Naive thymus-derived CD8-positive, alpha-beta T cell (primary cell): ENCODE measurements at regions of chr12 and their contacts with region 1.

Region 1: DNA sequence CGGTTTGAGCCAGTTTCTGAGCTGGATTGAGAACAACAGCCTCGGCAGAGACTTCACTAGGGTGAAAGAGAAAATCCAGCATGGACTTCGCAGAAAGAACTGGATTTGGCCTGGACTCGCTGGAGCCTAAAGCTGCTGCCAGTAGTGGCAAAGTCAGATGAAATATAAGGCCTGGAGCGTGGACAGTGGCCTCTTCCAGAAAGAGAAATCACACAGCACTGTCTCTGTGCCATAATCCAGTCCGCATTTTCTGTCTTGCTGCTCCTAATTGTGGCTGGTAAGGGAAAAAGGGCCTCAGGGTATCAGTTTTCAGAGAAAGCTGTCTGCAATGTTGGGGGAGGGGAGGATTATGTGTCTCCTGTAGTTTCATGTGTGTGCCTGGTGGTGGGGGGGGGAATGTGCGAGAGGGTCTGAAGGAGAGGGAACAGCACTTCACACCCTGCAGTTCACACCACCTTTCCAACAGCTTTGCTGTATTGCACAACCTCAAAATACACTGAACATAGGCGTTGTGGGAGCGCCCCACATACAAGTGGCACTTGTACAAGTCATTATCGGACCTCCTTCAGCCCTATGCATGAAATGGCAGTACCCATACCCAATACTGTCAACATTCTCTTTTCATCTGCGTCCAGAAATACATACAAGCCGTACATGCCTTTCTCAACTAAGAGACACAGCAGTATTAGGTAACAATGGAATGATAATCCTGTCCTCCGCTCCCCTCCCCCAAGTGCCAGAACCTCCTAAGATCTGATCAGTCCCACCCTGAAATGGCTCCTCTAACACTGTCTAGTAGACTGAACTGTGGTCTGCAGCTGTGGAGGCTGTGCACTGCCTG is 107.5 kb upstream of the ATF7IP start:
- DNase-seq: peak; percentile 61 to 88 (median 77)
- ATAC-seq: peak; percentile 50 to 66
- H3K4me3 Mint-ChIP-seq: peak overlapping the region; percentile 70 to 87 (median 78)
- H3K27ac Mint-ChIP-seq: peak overlapping the region; percentile 88 to 99 (median 98)
- H3K4me1 Mint-ChIP-seq: peaks cover 23 to 79% (median 57%) of the 10 kb centered on the region in 4 donors
- H3K27me3 Mint-ChIP-seq: no peaks in the 10 kb centered on the region

Region 2: GRCh38 chr12:14148489-14149270 is 109.3 kb before region 1 on chr12:
- POLR2A ChIA-PET with region 1: no interaction called
- DNase-seq: no peak
- ATAC-seq: no peak
- H3K4me3 Mint-ChIP-seq: no peak overlapping the region
- H3K27ac Mint-ChIP-seq: no peak overlapping the region
- H3K4me1 Mint-ChIP-seq: peaks cover 0 to 4% (median under 1%) of the 10 kb centered on the region in 4 donors
- H3K27me3 Mint-ChIP-seq: peaks cover 6 to 16% (median 11%) of the 10 kb centered on the region in 5 donors

Region 3: GRCh38 chr12:14384783-14385638 is 127.1 kb after region 1 on chr12:
- POLR2A ChIA-PET with region 1: interaction called, 15 read pairs
- DNase-seq: peak in 9 of 10 donors; percentile 29 to 80 (median 75)
- ATAC-seq: peak; percentile 92 to 96
- H3K4me3 Mint-ChIP-seq: peak overlapping the region; percentile 46 to 87 (median 78)
- H3K27ac Mint-ChIP-seq: peak overlapping the region; percentile 85 to 99 (median 92)
- H3K4me1 Mint-ChIP-seq: peaks cover 20 to 73% (median 57%) of the 10 kb centered on the region in 4 donors
- H3K27me3 Mint-ChIP-seq: no peaks in the 10 kb centered on the region

Region 4: DNA sequence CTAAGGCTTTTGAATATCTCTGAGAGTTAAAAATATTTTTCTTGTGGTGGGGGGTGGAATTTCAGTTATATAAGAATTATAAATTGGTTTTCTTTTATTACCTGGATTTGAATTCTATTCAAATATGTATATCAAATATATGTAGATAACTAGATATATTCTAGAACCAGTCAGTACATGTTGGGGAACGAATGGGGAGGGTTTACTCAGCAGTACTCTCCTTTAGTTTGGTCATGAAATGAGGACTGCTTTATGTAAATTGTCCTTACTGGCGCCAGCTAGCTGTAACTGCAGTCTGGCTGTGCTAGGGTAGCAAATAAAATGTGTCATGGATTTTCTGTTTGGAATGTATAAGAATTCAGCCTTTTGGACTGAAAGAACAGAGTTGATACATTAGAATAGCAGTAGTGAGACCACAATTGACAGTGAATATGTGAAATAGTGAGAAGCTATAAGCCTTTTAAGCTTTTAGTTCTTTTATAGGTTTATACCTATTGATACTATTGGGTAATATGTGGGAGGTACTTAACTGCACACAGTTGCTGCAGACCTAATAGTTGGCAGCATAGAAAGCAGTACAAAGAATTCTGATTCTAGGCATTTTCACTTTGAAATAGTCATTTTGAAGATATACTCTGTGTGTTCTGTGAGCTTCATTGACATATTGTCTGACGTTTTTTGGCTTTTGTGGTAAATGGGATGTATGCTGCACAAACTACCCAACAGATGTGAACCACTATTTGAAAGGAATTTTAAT is 136.5 kb after region 1 on chr12:
- POLR2A ChIA-PET with region 1: interaction called, 26 read pairs
- DNase-seq: peak in 6 of 10 donors; percentile 25 to 82 (median 66)
- ATAC-seq: peak; percentile 65 to 77
- H3K4me3 Mint-ChIP-seq: peak overlapping the region; percentile 46 to 85 (median 75)
- H3K27ac Mint-ChIP-seq: peak overlapping the region; percentile 92 to 99 (median 94)
- H3K4me1 Mint-ChIP-seq: peaks cover 20 to 93% (median 70%) of the 10 kb centered on the region in 4 donors
- H3K27me3 Mint-ChIP-seq: no peaks in the 10 kb centered on the region

Region 5: GRCh38 chr12:14417715-14418114 is 159.8 kb after region 1 on chr12:
- POLR2A ChIA-PET with region 1: interaction called, 21 read pairs
- DNase-seq: peak; percentile 53 to 88 (median 78)
- ATAC-seq: peak; percentile 82 to 86
- H3K4me3 Mint-ChIP-seq: peak overlapping the region; percentile 68 to 92 (median 83)
- H3K27ac Mint-ChIP-seq: peak overlapping the region in 9 of 10 donors; percentile 71 to 96 (median 90)
- H3K4me1 Mint-ChIP-seq: peaks cover 20 to 77% (median 59%) of the 10 kb centered on the region in 4 donors
- H3K27me3 Mint-ChIP-seq: no peaks in the 10 kb centered on the region